Activated B cell treated with CpG ODN at 0.5 μM for 24 hours (primary cell): ENCODE measurements at regions of chr10 and their contacts with region 1.

Region 1: GRCh38 chr10:15122477-15123030 is 25.4 kb downstream of the RPP38 start:
- DNase-seq: no peak
- ATAC-seq: no peak
- H3K4me3 Mint-ChIP-seq: no peak overlapping the region
- H3K27ac Mint-ChIP-seq: no peak overlapping the region
- H3K4me1 Mint-ChIP-seq: peaks cover 4% of the 10 kb centered on the region
- H3K27me3 Mint-ChIP-seq: no peaks in the 10 kb centered on the region
- CTCF ChIP-seq: no peak

Region 2: DNA sequence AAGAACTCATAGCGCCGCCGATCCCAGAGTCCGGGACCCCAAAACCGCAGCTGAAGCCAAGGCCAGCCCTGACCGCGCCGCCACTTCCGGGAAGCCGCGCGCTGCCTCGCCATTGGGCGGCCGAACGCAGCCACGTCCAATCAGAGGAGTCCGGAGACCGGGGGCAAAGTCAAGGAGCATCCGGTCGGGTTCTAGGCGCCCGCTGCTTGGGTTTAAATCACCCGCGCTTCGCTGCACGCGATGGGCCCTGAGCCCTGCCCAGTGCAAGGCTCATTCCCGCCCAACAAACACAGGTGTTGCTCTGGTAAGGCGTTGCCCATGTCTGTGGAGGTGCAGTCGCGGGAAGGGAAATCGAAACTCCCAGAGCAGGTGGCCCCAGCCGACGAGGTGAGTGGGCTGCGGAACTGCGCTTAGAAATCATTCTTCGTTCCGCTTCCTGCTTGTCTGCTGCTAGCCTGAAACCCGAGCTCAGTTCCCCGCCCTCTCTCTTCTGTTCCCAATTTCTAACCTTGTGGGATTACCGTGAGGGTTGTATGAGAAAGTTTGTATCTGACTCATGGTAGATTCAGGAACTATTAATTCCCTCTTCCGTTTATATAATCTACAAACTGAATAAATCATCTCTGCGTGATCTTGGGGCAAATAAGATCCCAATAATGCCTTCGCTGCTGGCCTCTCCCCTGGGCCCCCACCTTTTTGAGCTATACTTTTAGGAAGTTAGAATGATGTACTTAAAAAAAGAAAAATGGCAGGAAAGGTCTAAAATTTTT is 168.4 kb before region 1 on chr10 and contains the start of gene DCLRE1C:
- CTCF ChIA-PET with region 1: no interaction called
- POLR2A ChIA-PET with region 1: interaction called, 12 read pairs
- intact Hi-C with region 1: no loop called
- DNase-seq: peak; percentile 77
- ATAC-seq: peak; percentile 78
- H3K4me3 Mint-ChIP-seq: peak within 1 kb of the TSS; percentile 90
- H3K27ac Mint-ChIP-seq: peak within 1 kb of the TSS; percentile 96
- H3K4me1 Mint-ChIP-seq: peaks cover 56% of the 10 kb centered on the region
- H3K27me3 Mint-ChIP-seq: no peaks in the 10 kb centered on the region
- CTCF ChIP-seq: no peak
- total RNA-seq, gene DCLRE1C: 38.0 and 43.8 TPM in 2 replicates

Region 3: DNA sequence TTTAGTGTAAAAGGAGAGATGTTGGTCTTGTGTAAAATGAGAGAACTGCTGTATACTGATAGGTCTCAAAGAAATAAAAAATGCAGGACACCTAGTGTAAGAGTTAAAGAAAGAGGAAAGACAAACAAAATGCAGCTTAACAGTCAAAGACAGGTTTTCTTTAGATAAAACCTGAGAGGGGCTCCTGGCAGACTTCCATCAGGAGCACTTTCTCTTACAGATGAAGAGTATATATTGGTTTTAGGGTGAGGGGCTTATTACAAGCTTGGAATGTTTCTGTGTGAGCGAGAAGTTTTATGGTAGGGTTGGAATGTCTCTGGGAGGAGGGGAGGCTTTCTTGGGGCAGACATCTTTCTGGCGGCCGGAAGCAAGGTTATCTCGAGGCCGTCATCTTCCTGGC is 50.2 kb before region 1 on chr10:
- CTCF ChIA-PET with region 1: no interaction called
- POLR2A ChIA-PET with region 1: no interaction called
- intact Hi-C with region 1: no loop called
- DNase-seq: no peak
- ATAC-seq: no peak
- H3K4me3 Mint-ChIP-seq: no peak overlapping the region
- H3K27ac Mint-ChIP-seq: no peak overlapping the region
- H3K4me1 Mint-ChIP-seq: no peaks in the 10 kb centered on the region
- H3K27me3 Mint-ChIP-seq: peaks cover 6% of the 10 kb centered on the region
- CTCF ChIP-seq: no peak

Region 4: GRCh38 chr10:15189133-15189885 is 66.8 kb after region 1 on chr10:
- CTCF ChIA-PET with region 1: no interaction called
- POLR2A ChIA-PET with region 1: interaction called, 12 read pairs
- intact Hi-C with region 1: no loop called
- DNase-seq: no peak
- ATAC-seq: peak; percentile 81
- H3K4me3 Mint-ChIP-seq: peak overlapping the region; percentile 29
- H3K27ac Mint-ChIP-seq: peak overlapping the region; percentile 9
- H3K4me1 Mint-ChIP-seq: peaks cover 16% of the 10 kb centered on the region
- H3K27me3 Mint-ChIP-seq: no peaks in the 10 kb centered on the region
- CTCF ChIP-seq: no peak